Heart right ventricle (tissue), 16 donors: ENCODE measurements at regions of chr16 and their contacts with region 1.

Region 1: GRCh38 chr16:67672739-67673662 is 6.4 kb downstream of the C16orf86 start:
- DNase-seq: peak; percentile 66 to 77
- ATAC-seq: peak; percentile 41 to 82 (median 62)
- H3K4me3 ChIP-seq: no peak overlapping the region
- H3K27ac ChIP-seq: peak overlapping the region; percentile 61 to 89 (median 81)
- H3K4me1 ChIP-seq: peaks cover 13 to 56% (median 31%) of the 10 kb centered on the region in 9 donors
- H3K27me3 ChIP-seq: no peaks in the 10 kb centered on the region
- CTCF ChIP-seq: peak; percentile 57 to 86 (median 77)

Region 2: GRCh38 chr16:67595033-67595355 is 78.0 kb before region 1 on chr16:
- intact Hi-C with region 1: no loop called
- DNase-seq: no peak
- ATAC-seq: peak in 1 of 8 donors; percentile 35
- H3K4me3 ChIP-seq: no peak overlapping the region
- H3K27ac ChIP-seq: no peak overlapping the region
- H3K4me1 ChIP-seq: peaks cover 0 to 24% (median 10%) of the 10 kb centered on the region in 9 donors
- H3K27me3 ChIP-seq: no peaks in the 10 kb centered on the region
- CTCF ChIP-seq: no peak

Region 3: GRCh38 chr16:67713647-67714273 is 40.8 kb after region 1 on chr16:
- intact Hi-C with region 1: loop called in 4 of 10 experiments (anchors 2 to 5 kb)
- DNase-seq: no peak
- ATAC-seq: no peak
- H3K4me3 ChIP-seq: no peak overlapping the region
- H3K27ac ChIP-seq: no peak overlapping the region
- H3K4me1 ChIP-seq: peaks cover 0 to 32% (median 12%) of the 10 kb centered on the region in 9 donors
- H3K27me3 ChIP-seq: no peaks in the 10 kb centered on the region
- CTCF ChIP-seq: no peak

Region 4: DNA sequence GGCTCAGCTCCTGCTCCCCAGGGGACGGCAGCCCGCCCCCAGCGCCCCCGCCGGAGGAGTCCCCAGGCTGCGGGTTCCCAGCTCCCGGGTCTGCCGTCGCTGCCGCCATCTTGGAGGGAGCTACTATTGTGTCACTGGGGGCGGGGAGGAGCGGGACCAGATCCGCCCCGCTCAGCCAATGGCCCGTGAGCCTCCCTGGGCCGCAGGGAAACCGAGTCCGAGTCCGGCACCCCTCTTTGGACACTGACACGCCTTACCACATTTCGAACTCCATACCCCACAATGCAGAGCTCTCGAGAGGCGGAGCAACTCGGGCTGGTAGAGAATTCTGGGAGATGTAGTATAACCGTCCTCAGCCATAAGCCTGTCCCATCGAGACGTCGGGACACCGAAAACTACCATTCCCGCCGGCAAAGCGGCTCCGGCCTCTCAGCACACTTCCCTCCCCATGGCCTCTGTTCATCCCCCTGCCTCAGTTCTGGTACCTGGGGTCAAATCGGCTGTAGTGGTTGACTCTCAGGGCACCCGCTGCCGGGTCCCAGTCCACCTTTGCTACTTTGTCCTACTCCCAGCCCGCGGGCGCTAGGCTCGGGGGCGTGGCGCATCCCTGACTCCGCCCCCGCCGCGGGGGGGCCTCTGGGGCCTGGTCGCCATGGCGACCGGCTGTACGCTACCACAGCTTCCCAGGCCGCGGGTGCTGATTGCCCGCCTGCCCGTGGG is 133.6 kb after region 1 on chr16 and contains the starts of genes RANBP10 and TSNAXIP1:
- intact Hi-C with region 1: loop called in 9 of 10 experiments (anchors 5 to 10 kb)
- DNase-seq: peak; percentile 95 to 98
- ATAC-seq: peak; percentile 97 to 99 (median 98)
- H3K4me3 ChIP-seq: peak within 1 kb of the TSS; percentile 54 to 100 (median 91)
- H3K27ac ChIP-seq: peak within 1 kb of the TSS in 9 of 10 donors; percentile 77 to 94 (median 87)
- H3K4me1 ChIP-seq: peaks cover 8 to 39% (median 20%) of the 10 kb centered on the region in 9 donors
- H3K27me3 ChIP-seq: no peaks in the 10 kb centered on the region
- CTCF ChIP-seq: no peak
- total RNA-seq, gene RANBP10: 11.1 to 21.6 (median 15.6) TPM
- total RNA-seq, gene TSNAXIP1: 0.15 to 1.1 (median 0.48) TPM

Region 5: GRCh38 chr16:67841764-67842508 is 168.9 kb after region 1 on chr16 and contains the start of gene THAP11:
- intact Hi-C with region 1: loop called in 1 of 10 experiments (anchors 10 kb)
- DNase-seq: peak; percentile 92 to 95
- ATAC-seq: peak; percentile 76 to 90 (median 80)
- H3K4me3 ChIP-seq: peak within 1 kb of the TSS; percentile 57 to 96 (median 89)
- H3K27ac ChIP-seq: peak within 1 kb of the TSS; percentile 96 to 100 (median 100)
- H3K4me1 ChIP-seq: peaks cover 17 to 46% (median 42%) of the 10 kb centered on the region in 9 donors
- H3K27me3 ChIP-seq: no peaks in the 10 kb centered on the region
- CTCF ChIP-seq: peak; percentile 76 to 91 (median 85)
- total RNA-seq, gene THAP11: 20.6 to 41.3 (median 26.9) TPM

Region 6: GRCh38 chr16:67928561-67929364 is 255.8 kb after region 1 on chr16:
- intact Hi-C with region 1: loop called in 6 of 10 experiments (anchors 2 to 10 kb)
- DNase-seq: peak; percentile 67 to 78
- ATAC-seq: peak; percentile 51 to 77 (median 67)
- H3K4me3 ChIP-seq: no peak overlapping the region
- H3K27ac ChIP-seq: peak overlapping the region in 1 of 10 donors; percentile 4
- H3K4me1 ChIP-seq: peaks cover 0 to 39% (median 20%) of the 10 kb centered on the region in 9 donors
- H3K27me3 ChIP-seq: no peaks in the 10 kb centered on the region
- CTCF ChIP-seq: peak; percentile 69 to 91 (median 85)

Region 7: DNA sequence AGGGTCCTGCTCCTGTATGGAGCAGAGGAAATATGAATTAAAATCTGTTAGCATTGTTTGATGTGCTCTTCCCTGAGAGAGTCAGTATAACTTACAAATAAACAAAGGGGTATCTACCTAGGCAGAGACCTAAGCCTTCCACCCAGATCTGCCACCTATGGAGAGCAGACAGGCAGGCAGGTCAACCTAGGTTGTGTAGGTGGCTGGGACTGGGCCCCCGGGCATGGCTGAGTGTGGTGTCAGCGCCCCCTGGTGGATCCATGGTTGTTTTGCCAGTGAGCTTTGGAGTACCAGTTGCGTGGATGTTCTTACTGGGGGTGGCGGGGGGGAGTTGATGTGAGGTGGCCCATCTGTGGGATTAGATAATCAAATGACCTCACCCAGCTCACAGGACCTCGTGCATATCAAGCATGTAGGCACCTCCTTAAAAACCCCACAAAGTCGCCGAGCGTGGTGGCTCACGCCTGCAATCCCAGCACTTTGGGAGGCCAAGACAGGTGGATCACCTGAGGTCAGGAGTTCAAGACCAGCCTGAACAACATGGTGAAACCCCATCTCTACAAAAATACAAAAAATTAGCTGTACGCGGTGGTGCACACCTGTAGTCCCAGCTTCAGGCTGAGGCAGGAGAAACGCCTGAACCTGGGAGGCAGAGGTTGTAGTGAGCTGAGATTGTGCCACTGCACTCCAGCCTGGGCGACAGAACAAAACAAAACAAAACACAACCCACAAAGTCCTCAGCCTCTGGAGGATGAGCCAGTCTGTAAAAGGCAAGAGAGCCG is 367.7 kb after region 1 on chr16:
- intact Hi-C with region 1: loop called in 2 of 10 experiments (anchors 5 to 10 kb)
- DNase-seq: peak; percentile 83 to 84
- ATAC-seq: peak; percentile 89 to 96 (median 94)
- H3K4me3 ChIP-seq: no peak overlapping the region
- H3K27ac ChIP-seq: peak overlapping the region in 1 of 10 donors; percentile 69
- H3K4me1 ChIP-seq: peaks cover 0 to 45% (median 0%) of the 10 kb centered on the region in 9 donors
- H3K27me3 ChIP-seq: no peaks in the 10 kb centered on the region
- CTCF ChIP-seq: peak; percentile 73 to 88 (median 83)